ENCODE measurements at regions of chr9 and their contacts with region 1.

Region 1: GRCh38 chr9:79571309-79572031 is at the start of gene TLE4:
- DNase-seq: peak; percentile 100
- ATAC-seq: peak; percentile 82
- H3K4me3 ChIP-seq: peak within 1 kb of the TSS; percentile 69 to 95 (median 92)
- H3K4me3 Mint-ChIP-seq: peak within 1 kb of the TSS; percentile 83
- H3K27ac ChIP-seq: peak within 1 kb of the TSS; percentile 80 to 91
- H3K27ac Mint-ChIP-seq: peak within 1 kb of the TSS; percentile 93
- H3K4me1 ChIP-seq: peaks cover 23 to 25% of the 10 kb centered on the region in 2 donors
- H3K4me1 Mint-ChIP-seq: peaks cover 38% of the 10 kb centered on the region
- H3K27me3 ChIP-seq: peaks cover 0 to 10% (median 5%) of the 10 kb centered on the region in 4 experiments
- H3K27me3 Mint-ChIP-seq: peaks cover 11% of the 10 kb centered on the region
- CTCF ChIP-seq: no peak
- total RNA-seq, gene TLE4: 57.3 and 65.1 TPM in 2 replicates

Region 2: GRCh38 chr9:78296893-78297671 is 1274.4 kb before region 1 on chr9 and contains the start of gene PSAT1:
- CTCF ChIA-PET with region 1: no interaction called
- POLR2A ChIA-PET with region 1: no interaction called
- intact Hi-C with region 1: loop called (anchors 5 kb)
- DNase-seq: peak; percentile 88
- ATAC-seq: peak; percentile 97
- H3K4me3 ChIP-seq: peak within 1 kb of the TSS; percentile 67 to 77 (median 70)
- H3K4me3 Mint-ChIP-seq: peak within 1 kb of the TSS; percentile 87
- H3K27ac ChIP-seq: no peak within 1 kb of the TSS
- H3K27ac Mint-ChIP-seq: peak within 1 kb of the TSS; percentile 70
- H3K4me1 ChIP-seq: peaks cover 17 to 26% of the 10 kb centered on the region in 2 donors
- H3K4me1 Mint-ChIP-seq: peaks cover 18% of the 10 kb centered on the region
- H3K27me3 ChIP-seq: peaks cover 0 to 17% (median 6%) of the 10 kb centered on the region in 4 experiments
- H3K27me3 Mint-ChIP-seq: no peaks in the 10 kb centered on the region
- CTCF ChIP-seq: no peak
- total RNA-seq, gene PSAT1: 5.0 and 5.2 TPM in 2 replicates

Region 3: DNA sequence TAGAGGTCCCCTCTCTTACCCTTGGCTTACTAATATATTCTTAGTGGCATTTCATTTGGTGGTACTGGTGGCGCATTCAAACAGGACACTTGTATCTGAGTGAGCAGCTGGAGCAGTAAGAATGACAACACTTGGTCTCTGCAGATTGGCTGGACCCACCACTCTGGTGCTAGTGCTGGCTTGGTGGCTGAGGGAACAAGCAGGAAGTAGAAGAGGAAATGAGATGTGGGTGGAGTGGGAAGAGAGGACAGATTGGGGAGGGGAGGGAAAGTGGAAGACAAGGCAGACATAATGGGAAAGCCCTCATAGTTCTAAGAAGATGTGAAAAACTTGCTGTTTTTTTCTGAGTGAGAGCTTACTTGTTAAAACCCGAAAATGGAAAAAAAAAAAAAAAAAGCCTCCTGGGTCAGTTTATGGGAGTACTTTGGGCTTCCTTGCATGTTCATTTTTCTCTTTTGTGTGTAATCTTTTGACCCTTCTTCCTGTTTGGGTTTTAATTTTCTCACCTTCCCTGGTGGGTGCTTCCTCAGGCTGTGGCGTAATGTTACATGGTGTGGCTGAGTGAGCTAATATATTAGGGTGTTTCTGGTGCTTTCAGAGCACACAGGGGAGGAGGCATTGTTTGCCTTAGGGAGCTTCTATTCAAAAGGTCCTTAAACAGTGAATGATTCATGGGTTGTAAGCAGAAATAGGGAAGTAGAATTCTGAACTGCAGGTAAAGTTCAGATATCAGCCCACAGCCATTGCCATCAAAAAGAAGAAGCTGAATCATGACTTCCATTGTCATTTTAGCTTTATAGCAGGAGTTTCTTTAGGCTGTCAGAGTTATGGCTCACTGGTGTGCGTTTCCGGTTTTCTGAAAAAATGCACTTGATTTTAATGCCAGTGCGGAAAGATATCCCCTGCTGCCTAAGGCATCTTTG is 52.6 kb after region 1 on chr9:
- CTCF ChIA-PET with region 1: interaction called, 3 read pairs
- POLR2A ChIA-PET with region 1: interaction called, 8 read pairs
- intact Hi-C with region 1: loop called (anchors 1 kb)
- DNase-seq: peak; percentile 65
- ATAC-seq: peak; percentile 93
- H3K4me3 ChIP-seq: no peak overlapping the region
- H3K4me3 Mint-ChIP-seq: peak overlapping the region; percentile 75
- H3K27ac ChIP-seq: no peak overlapping the region
- H3K27ac Mint-ChIP-seq: peak overlapping the region; percentile 79
- H3K4me1 ChIP-seq: peaks cover 12 to 17% of the 10 kb centered on the region in 2 donors
- H3K4me1 Mint-ChIP-seq: peaks cover 19% of the 10 kb centered on the region
- H3K27me3 ChIP-seq: no peaks in the 10 kb centered on the region
- H3K27me3 Mint-ChIP-seq: no peaks in the 10 kb centered on the region
- CTCF ChIP-seq: no peak

Region 4: GRCh38 chr9:79883073-79883645 is 311.7 kb after region 1 on chr9:
- CTCF ChIA-PET with region 1: no interaction called
- POLR2A ChIA-PET with region 1: no interaction called
- intact Hi-C with region 1: loop called (anchors 10 kb)
- DNase-seq: peak; percentile 60
- ATAC-seq: peak; percentile 74
- H3K4me3 ChIP-seq: peak overlapping the region in 2 of 5 experiments; percentile 5 to 14
- H3K4me3 Mint-ChIP-seq: peak overlapping the region; percentile 85
- H3K27ac ChIP-seq: no peak overlapping the region
- H3K27ac Mint-ChIP-seq: peak overlapping the region; percentile 81
- H3K4me1 ChIP-seq: peaks cover 65 to 66% of the 10 kb centered on the region in 2 donors
- H3K4me1 Mint-ChIP-seq: peaks cover 72% of the 10 kb centered on the region
- H3K27me3 ChIP-seq: no peaks in the 10 kb centered on the region
- H3K27me3 Mint-ChIP-seq: no peaks in the 10 kb centered on the region
- CTCF ChIP-seq: no peak

Region 5: DNA sequence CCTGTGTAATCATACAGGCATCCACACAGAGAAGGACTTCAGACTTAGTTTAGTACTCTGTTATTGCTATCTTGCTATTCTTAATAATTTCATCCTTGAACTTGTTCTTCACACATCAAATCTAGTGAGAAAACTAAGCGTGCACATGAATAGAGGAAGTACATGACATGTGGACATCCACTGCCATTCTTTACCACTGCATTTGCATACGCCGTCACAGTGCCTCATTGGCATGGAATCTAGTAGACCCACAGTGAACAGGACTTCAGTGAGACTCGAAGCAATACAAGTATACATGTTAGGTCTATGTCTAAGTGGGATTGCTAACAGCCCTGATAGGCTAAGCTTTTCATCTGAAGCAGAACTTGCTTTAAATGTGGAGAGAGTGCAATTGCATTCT is 592.4 kb after region 1 on chr9:
- CTCF ChIA-PET with region 1: no interaction called
- POLR2A ChIA-PET with region 1: no interaction called
- intact Hi-C with region 1: loop called (anchors 10 kb)
- DNase-seq: peak; percentile 73
- ATAC-seq: peak; percentile 81
- H3K4me3 ChIP-seq: peak overlapping the region in 1 of 5 experiments; percentile 19
- H3K4me3 Mint-ChIP-seq: no peak overlapping the region
- H3K27ac ChIP-seq: no peak overlapping the region
- H3K27ac Mint-ChIP-seq: peak overlapping the region; percentile 26
- H3K4me1 ChIP-seq: peaks cover 9 to 11% of the 10 kb centered on the region in 2 donors
- H3K4me1 Mint-ChIP-seq: peaks cover 15% of the 10 kb centered on the region
- H3K27me3 ChIP-seq: no peaks in the 10 kb centered on the region
- H3K27me3 Mint-ChIP-seq: no peaks in the 10 kb centered on the region
- CTCF ChIP-seq: no peak

Measured in B cell (primary cell).